Activated CD4-positive, alpha-beta memory T cell treated with anti-CD3 and anti-CD28 coated beads for 36 hours (primary cell): ENCODE measurements at regions of chr17 and their contacts with region 1.

Region 1: GRCh38 chr17:62653002-62653825 is 25.7 kb downstream of the MRC2 start:
- DNase-seq: peak; percentile 96
- H3K4me3 Mint-ChIP-seq: peak overlapping the region; percentile 74
- H3K27ac Mint-ChIP-seq: peak overlapping the region; percentile 54
- H3K4me1 Mint-ChIP-seq: peaks cover 24% of the 10 kb centered on the region
- H3K27me3 Mint-ChIP-seq: peaks cover 27% of the 10 kb centered on the region

Region 2: DNA sequence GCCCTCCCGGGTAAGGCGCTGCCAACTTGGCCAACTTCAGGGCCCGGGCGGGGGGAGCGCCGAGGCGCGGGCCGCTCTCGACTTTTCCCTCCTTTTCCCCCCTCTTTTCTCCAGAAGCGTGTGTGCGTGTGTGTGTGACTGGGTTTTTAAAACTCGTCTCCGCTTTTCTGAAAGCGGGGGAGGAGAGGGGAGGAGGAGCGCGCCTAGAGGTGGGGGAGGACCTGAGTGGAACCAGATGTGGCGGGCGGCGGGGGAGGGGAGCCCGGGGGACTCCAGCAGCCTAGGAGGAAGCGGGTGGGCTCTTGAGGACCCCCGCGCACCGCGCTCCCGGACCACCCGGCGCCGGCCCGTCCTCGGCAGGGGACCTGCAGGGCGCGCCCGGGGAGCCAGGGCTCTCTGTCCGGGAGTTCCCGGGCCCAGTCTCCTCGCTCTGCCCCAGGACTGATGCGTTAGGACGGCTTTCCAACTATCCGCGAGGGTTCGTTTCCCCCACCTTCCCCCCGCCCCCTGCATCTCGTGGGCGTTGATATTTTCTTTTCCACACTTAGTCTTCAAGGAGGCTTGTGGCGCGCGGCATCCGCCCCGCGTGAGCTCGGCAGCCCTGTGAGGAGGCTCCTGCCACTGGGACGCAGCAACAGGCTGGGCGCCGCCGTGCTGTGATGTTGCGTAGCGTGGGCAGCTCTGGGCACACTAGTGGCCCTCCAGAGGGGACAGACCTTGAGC is 25.1 kb before region 1 on chr17:
- CTCF ChIA-PET with region 1: no interaction called
- POLR2A ChIA-PET with region 1: interaction called, 3 read pairs
- intact Hi-C with region 1: loop called (anchors 2 kb)
- DNase-seq: peak; percentile 58
- H3K4me3 Mint-ChIP-seq: peak overlapping the region; percentile 78
- H3K27ac Mint-ChIP-seq: peak overlapping the region; percentile 74
- H3K4me1 Mint-ChIP-seq: peaks cover 15% of the 10 kb centered on the region
- H3K27me3 Mint-ChIP-seq: peaks cover 13% of the 10 kb centered on the region

Region 3: GRCh38 chr17:62739645-62740388 is 86.6 kb after region 1 on chr17:
- CTCF ChIA-PET with region 1: no interaction called
- POLR2A ChIA-PET with region 1: no interaction called
- intact Hi-C with region 1: loop called (anchors 5 kb)
- DNase-seq: no peak
- H3K4me3 Mint-ChIP-seq: no peak overlapping the region
- H3K27ac Mint-ChIP-seq: no peak overlapping the region
- H3K4me1 Mint-ChIP-seq: peaks cover 21% of the 10 kb centered on the region
- H3K27me3 Mint-ChIP-seq: peaks cover 32% of the 10 kb centered on the region

Region 4: GRCh38 chr17:63039899-63040641 is 386.9 kb after region 1 on chr17:
- CTCF ChIA-PET with region 1: no interaction called
- POLR2A ChIA-PET with region 1: no interaction called
- intact Hi-C with region 1: loop called (anchors 5 kb)
- DNase-seq: no peak
- H3K4me3 Mint-ChIP-seq: no peak overlapping the region
- H3K27ac Mint-ChIP-seq: no peak overlapping the region
- H3K4me1 Mint-ChIP-seq: peaks cover 16% of the 10 kb centered on the region
- H3K27me3 Mint-ChIP-seq: no peaks in the 10 kb centered on the region